SK-N-SH (cell line): ENCODE measurements at regions of chr17 and their contacts with region 1.

Region 1: GRCh38 chr17:4903051-4903818 is at the start of gene CHRNE:
- DNase-seq: peak; percentile 78
- H3K4me3 ChIP-seq: peak within 1 kb of the TSS in 1 of 2 experiments; percentile 9; a peak in 1 of 4 replicates
- H3K27ac ChIP-seq: no peak within 1 kb of the TSS
- H3K4me1 ChIP-seq: peaks cover 0 to 12% of the 10 kb centered on the region in 2 experiments; a peak in 1 of 4 replicates
- H3K27me3 ChIP-seq: no peaks in the 10 kb centered on the region
- CTCF ChIP-seq: peak; percentile 82
- EP300 ChIP-seq: no peak
- RAD21 ChIP-seq: peak; percentile 64
- polyA plus RNA-seq, gene CHRNE: 0.54 and 0.71 TPM in 2 replicates

Region 2: DNA sequence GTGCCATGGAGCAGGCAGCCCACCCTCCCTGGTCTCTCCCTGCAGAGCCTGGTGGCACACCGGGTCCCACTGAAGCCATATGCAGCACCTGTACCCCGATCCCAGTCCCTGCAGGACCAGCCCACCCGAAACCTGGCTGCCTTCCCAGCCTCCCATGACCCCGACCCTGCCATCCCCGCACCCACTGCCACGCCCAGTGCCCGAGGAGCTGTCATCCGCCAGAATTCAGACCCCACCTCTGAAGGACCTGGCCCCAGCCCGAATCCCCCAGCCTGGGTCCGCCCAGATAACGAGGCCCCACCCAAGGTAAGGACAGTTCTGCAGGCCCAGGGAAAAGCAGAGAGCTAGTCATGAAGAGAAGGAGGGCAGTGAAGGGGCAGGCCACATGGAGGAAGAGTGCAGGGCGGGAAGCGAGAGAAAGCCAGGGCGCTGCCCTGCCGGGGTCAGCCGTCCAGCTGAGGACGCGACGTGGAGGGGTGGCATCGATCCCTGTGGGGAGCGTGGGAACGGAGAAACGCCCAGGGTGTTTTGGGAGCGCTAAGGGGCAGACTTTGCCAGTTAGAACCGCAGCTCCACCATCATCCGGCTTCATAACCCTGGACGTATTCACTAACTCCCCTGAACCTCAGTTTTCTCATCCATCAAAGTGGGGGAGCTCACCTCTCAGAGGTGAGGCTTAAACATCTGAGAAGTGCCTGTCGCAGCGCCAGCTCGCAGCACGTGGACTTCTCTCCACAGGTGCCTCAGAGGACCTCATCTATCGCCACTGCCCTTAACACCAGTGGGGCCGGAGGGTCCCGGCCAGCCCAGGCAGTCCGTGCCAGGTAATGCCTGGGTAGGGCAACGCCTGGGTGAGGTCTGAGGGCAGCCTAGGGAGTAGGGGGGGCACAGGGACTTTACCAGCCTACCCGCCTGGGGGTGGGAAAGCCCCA is 11.6 kb before region 1 on chr17:
- CTCF ChIA-PET with region 1: interaction called, 45 read pairs
- POLR2A ChIA-PET with region 1: no interaction called
- DNase-seq: no peak
- H3K4me3 ChIP-seq: no peak overlapping the region
- H3K27ac ChIP-seq: no peak overlapping the region
- H3K4me1 ChIP-seq: no peaks in the 10 kb centered on the region
- H3K27me3 ChIP-seq: no peaks in the 10 kb centered on the region
- CTCF ChIP-seq: no peak
- EP300 ChIP-seq: no peak
- RAD21 ChIP-seq: no peak

Region 3: DNA sequence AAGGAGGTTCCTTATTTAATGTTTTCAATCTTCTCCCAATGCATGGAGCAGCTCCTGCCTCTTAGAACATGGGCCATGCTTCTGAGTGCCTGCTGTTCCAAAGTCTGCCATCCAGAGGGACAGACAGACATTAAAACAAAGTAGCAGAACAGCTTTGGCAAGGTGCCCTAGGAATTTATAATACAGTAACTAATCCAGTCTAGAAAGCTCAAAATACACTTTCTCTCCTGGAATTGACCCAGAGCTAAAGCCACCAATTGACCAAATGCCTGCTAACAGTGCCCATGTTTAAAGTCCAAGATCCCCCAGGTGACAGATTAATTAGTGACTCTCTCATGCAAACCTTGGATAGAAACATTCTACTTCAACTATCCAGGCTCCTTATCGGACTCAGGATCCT is 10.8 kb after region 1 on chr17:
- CTCF ChIA-PET with region 1: interaction called, 15 read pairs
- POLR2A ChIA-PET with region 1: no interaction called
- DNase-seq: no peak
- H3K4me3 ChIP-seq: no peak overlapping the region
- H3K27ac ChIP-seq: no peak overlapping the region
- H3K4me1 ChIP-seq: peaks cover 0 to 2% of the 10 kb centered on the region in 2 experiments; a peak in 1 of 4 replicates
- H3K27me3 ChIP-seq: no peaks in the 10 kb centered on the region
- CTCF ChIP-seq: no peak
- EP300 ChIP-seq: no peak
- RAD21 ChIP-seq: no peak

Region 4: GRCh38 chr17:4934173-4934979 is 31.1 kb after region 1 on chr17:
- CTCF ChIA-PET with region 1: interaction called, 29 read pairs
- POLR2A ChIA-PET with region 1: interaction called, 18 read pairs
- DNase-seq: peak; percentile 72
- H3K4me3 ChIP-seq: no peak overlapping the region
- H3K27ac ChIP-seq: no peak overlapping the region
- H3K4me1 ChIP-seq: peaks cover 7 to 22% of the 10 kb centered on the region in 2 experiments; a peak in 2 of 4 replicates
- H3K27me3 ChIP-seq: no peaks in the 10 kb centered on the region
- CTCF ChIP-seq: peak; percentile 44
- EP300 ChIP-seq: no peak
- RAD21 ChIP-seq: peak; percentile 25; the same call in 1 of the 2 replicates

Region 5: GRCh38 chr17:4939796-4940624 is 36.8 kb after region 1 on chr17 and contains the starts of genes RNF167 and SLC25A11:
- CTCF ChIA-PET with region 1: interaction called, 29 read pairs
- POLR2A ChIA-PET with region 1: interaction called, 18 read pairs
- DNase-seq: peak; percentile 98
- H3K4me3 ChIP-seq: peak within 1 kb of the TSS; percentile 80 to 86
- H3K27ac ChIP-seq: peak within 1 kb of the TSS; percentile 94 to 98
- H3K4me1 ChIP-seq: peaks cover 16 to 27% of the 10 kb centered on the region in 2 experiments; a peak in 3 of 4 replicates
- H3K27me3 ChIP-seq: no peaks in the 10 kb centered on the region
- CTCF ChIP-seq: no peak
- EP300 ChIP-seq: no peak
- RAD21 ChIP-seq: no peak
- polyA plus RNA-seq, gene RNF167: 96.5 and 115 TPM in 2 replicates
- polyA plus RNA-seq, gene SLC25A11: 58.5 and 82.8 TPM in 2 replicates

Region 6: GRCh38 chr17:5203908-5204294 is 300.7 kb after region 1 on chr17:
- CTCF ChIA-PET with region 1: no interaction called
- POLR2A ChIA-PET with region 1: no interaction called
- DNase-seq: no peak
- H3K4me3 ChIP-seq: no peak overlapping the region
- H3K27ac ChIP-seq: no peak overlapping the region
- H3K4me1 ChIP-seq: no peaks in the 10 kb centered on the region
- H3K27me3 ChIP-seq: no peaks in the 10 kb centered on the region
- CTCF ChIP-seq: no peak
- EP300 ChIP-seq: no peak
- RAD21 ChIP-seq: no peak